Body of pancreas (tissue), 4 donors: ENCODE measurements at regions of chr2 and their contacts with region 1.

Region 1: GRCh38 chr2:26964446-26965130 is 5.8 kb upstream of the MAPRE3 start:
- DNase-seq: no peak
- ATAC-seq: no peak
- H3K4me3 ChIP-seq: no peak overlapping the region
- H3K27ac ChIP-seq: no peak overlapping the region
- H3K4me1 ChIP-seq: no peaks in the 10 kb centered on the region
- H3K27me3 ChIP-seq: no peaks in the 10 kb centered on the region
- CTCF ChIP-seq: no peak
- POLR2A ChIP-seq: no peak

Region 2: GRCh38 chr2:26922405-26923188 is 42.0 kb before region 1 on chr2:
- intact Hi-C with region 1: no loop called
- DNase-seq: peak; percentile 34 to 66 (median 57)
- ATAC-seq: peak; percentile 70
- H3K4me3 ChIP-seq: no peak overlapping the region
- H3K27ac ChIP-seq: no peak overlapping the region
- H3K4me1 ChIP-seq: no peaks in the 10 kb centered on the region
- H3K27me3 ChIP-seq: no peaks in the 10 kb centered on the region
- CTCF ChIP-seq: peak; percentile 29 to 63 (median 48)
- POLR2A ChIP-seq: no peak

Region 3: DNA sequence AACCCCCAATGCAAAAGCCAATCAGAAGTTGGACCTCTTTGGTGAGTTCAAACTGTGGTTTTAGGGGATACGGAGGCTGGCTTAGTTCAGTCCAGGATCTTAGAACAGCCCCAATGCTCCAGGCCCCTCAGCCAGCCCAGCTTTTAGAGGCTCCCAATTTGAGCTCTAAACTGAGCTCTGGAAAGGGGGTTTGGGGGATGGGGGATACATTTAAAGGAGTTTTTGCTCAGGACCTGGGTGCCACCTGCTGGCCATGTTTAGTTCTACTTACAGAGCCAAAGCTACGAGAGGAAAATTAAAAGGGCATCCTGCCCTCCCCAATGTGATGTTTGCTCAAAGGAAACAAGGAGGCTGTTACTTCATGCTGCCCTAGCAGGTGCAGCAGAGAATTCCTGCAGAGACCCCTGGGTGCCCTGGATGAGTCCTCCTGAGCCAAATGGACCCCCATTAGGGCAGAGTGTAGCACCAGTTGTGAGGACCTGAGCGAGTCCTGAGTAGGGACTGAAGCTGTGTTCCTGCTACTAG is 52.3 kb after region 1 on chr2:
- intact Hi-C with region 1: loop called (anchors 5 kb)
- DNase-seq: peak; percentile 52 to 77 (median 64)
- ATAC-seq: peak; percentile 51
- H3K4me3 ChIP-seq: no peak overlapping the region
- H3K27ac ChIP-seq: no peak overlapping the region
- H3K4me1 ChIP-seq: peaks cover 8% of the 10 kb centered on the region
- H3K27me3 ChIP-seq: no peaks in the 10 kb centered on the region
- CTCF ChIP-seq: peak; percentile 27 to 77 (median 67)
- POLR2A ChIP-seq: no peak